ENCODE measurements at regions of chr3 and their contacts with region 1.

Region 1: DNA sequence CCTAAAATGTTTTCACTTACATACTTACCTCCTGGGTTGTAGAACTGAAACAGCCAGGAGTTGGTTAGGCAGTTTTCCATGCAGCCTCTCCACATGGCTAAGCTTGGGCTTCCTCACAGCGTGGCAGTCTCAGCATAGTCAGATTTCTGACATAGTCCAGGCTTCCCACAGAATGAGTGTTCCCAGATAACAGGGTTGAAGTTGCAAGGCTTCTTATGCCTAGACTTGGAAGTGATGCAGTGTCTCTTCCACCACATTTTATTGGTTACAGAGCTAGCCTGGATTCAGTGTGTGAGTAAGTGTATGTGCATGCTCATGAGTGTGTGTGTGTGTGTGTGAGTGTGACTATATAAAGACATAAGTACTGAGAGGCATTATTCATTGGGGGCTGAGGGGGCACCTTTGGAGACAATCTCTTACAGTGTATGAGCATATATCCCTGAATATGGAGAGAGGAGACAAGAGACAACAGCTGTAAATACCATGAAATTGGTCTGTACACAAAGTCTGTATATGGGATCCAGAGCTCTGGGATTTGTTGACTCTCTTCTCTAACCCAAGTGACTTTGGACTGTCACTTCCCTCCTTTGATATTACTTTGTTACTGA is 78.1 kb downstream of the ZNF621 start:
- DNase-seq: no peak
- H3K4me3 ChIP-seq: no peak overlapping the region
- H3K27ac ChIP-seq: no peak overlapping the region
- H3K4me1 ChIP-seq: no peaks in the 10 kb centered on the region
- H3K27me3 ChIP-seq: no peaks in the 10 kb centered on the region
- CTCF ChIP-seq: no peak
- EP300 ChIP-seq: no peak
- POLR2A ChIP-seq: no peak

Region 2: DNA sequence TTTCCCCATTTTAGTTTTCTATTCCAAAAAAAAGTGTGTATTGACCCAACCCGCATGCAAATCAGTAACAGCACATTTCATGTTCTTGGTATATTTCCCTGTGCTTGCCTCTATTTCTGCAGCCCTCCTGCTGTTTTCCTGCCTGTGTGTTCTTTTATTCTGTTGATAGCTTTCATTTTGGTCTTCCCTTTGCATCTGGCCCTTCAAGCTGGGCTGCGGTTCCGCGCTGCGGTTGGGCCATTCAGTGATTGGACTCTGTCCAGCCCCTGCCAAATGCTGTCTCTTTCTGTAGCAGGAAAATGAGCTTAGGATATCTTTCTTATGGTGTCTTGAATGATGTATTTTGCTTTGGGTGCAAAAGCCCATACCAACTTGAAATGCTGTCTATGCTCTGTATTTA is 28.2 kb before region 1 on chr3:
- in situ Hi-C with region 1: no loop called
- intact Hi-C with region 1: loop called (anchors 1 kb)
- DNase-seq: no peak
- H3K4me3 ChIP-seq: no peak overlapping the region
- H3K27ac ChIP-seq: no peak overlapping the region
- H3K4me1 ChIP-seq: no peaks in the 10 kb centered on the region
- H3K27me3 ChIP-seq: no peaks in the 10 kb centered on the region
- CTCF ChIP-seq: no peak
- EP300 ChIP-seq: no peak
- POLR2A ChIP-seq: no peak

Region 3: DNA sequence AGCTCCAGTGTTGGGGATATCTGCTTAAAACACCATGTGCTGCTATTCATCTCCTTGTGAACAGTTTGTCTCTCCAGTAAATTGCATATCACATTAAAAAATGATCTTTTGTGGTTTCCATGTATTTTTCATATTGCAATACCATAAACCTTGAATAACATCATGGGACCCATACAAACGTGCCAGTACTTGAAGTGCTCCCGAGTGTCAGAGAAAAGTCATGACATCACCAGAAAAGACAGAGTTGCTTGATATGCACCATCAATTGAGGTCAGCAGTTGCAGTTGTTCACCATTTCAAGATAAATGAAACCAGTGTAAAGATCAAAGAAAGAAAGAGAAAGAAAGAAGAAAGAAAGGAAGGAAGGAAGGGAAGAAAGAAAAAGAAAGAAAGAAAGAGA is 200.4 kb after region 1 on chr3:
- in situ Hi-C with region 1: no loop called
- intact Hi-C with region 1: no loop called
- DNase-seq: no peak
- H3K4me3 ChIP-seq: no peak overlapping the region
- H3K27ac ChIP-seq: no peak overlapping the region
- H3K4me1 ChIP-seq: no peaks in the 10 kb centered on the region
- H3K27me3 ChIP-seq: no peaks in the 10 kb centered on the region
- CTCF ChIP-seq: no peak
- EP300 ChIP-seq: no peak
- POLR2A ChIP-seq: no peak

Region 4: GRCh38 chr3:41077451-41078147 is 474.7 kb after region 1 on chr3:
- in situ Hi-C with region 1: no loop called
- intact Hi-C with region 1: no loop called
- DNase-seq: no peak
- H3K4me3 ChIP-seq: no peak overlapping the region
- H3K27ac ChIP-seq: no peak overlapping the region
- H3K4me1 ChIP-seq: no peaks in the 10 kb centered on the region
- H3K27me3 ChIP-seq: no peaks in the 10 kb centered on the region
- CTCF ChIP-seq: no peak
- EP300 ChIP-seq: no peak
- POLR2A ChIP-seq: no peak